ENCODE measurements at regions of chr13 and their contacts with region 1.

Region 1: DNA sequence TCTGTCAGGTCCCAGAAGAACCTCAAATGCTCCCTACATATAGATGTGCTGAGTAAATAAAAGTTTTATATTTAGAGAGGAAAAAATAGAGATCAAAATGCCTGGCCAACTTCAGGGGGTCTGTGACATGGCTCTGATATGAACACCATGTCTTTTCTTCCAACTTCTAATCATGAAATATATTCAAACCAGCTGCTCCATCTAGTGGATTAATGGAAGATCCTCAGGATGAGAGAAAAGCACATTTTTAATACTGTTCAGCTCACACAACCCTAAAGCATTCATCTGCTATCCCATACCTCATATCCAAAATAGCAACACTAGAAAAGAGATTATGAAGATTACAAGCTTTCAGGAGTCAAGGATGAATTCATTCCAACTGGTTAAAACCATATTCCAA is 56.0 kb upstream of the DOCK9 start:
- DNase-seq: no peak
- ATAC-seq: peak; percentile 72

Region 2: DNA sequence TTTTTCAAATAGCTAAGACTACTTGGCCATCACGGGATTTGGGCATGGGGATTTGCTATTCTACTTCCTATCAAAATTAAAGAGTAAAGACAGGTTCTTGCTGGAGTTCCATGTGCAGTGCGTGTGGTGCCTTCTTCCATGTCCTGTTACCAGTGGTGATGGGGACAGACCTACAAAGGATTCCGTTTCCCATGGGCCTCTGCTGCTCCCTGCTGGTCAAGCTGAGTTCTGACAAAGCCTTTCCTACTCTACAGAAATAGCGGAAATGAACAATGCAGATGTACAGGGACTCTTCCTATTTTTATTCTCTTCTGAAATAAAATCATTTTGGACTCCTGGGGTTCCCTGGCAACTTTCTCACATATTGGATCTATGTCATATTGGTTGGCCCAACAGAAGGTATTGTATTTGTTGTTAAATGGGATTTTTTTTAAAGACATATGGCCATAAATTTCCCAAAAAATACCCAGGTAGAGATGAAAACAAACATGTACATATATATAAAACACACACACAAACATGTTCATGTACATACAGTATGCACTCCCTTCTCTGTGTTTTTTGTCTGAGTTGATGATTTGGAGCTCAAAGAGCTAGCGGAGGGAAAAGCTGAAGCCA is 190.8 kb before region 1 on chr13:
- intact Hi-C with region 1: loop called (anchors 5 kb)
- DNase-seq: peak; percentile 76
- ATAC-seq: peak; percentile 80

Region 3: GRCh38 chr13:98879957-98880356 is 153.9 kb before region 1 on chr13:
- intact Hi-C with region 1: loop called (anchors 5 kb)
- DNase-seq: no peak
- ATAC-seq: no peak

Region 4: GRCh38 chr13:98972627-98973026 is 61.2 kb before region 1 on chr13:
- intact Hi-C with region 1: loop called (anchors 2 kb)
- DNase-seq: no peak
- ATAC-seq: no peak

Region 5: GRCh38 chr13:98977568-98978265 is 56.1 kb before region 1 on chr13 and contains the start of gene DOCK9:
- intact Hi-C with region 1: loop called (anchors 2 kb)
- DNase-seq: peak; percentile 84
- ATAC-seq: peak; percentile 95
- total RNA-seq, gene DOCK9: 34.9 TPM